GM23248 (cell line): ENCODE measurements at regions of chr22 and their contacts with region 1.

Region 1: GRCh38 chr22:30235687-30236170 is 10.8 kb downstream of the LIF start:
- DNase-seq: peak; percentile 48
- H3K4me3 ChIP-seq: no peak overlapping the region
- H3K27ac ChIP-seq: peak overlapping the region; percentile 24
- H3K4me1 ChIP-seq: peaks cover 10% of the 10 kb centered on the region; the same call in 1 of the 2 replicates
- H3K27me3 ChIP-seq: no peaks in the 10 kb centered on the region

Region 2: GRCh38 chr22:30116362-30117117 is 119.2 kb before region 1 on chr22:
- in situ Hi-C with region 1: loop called (anchors 10 kb)
- DNase-seq: peak; percentile 82
- H3K4me3 ChIP-seq: no peak overlapping the region
- H3K27ac ChIP-seq: peak overlapping the region; percentile 55
- H3K4me1 ChIP-seq: peaks cover 20% of the 10 kb centered on the region
- H3K27me3 ChIP-seq: 0 out of 2 replicates have a peak, but pooled peaks cover 6% of the 10 kb centered on the region